CD4-positive, alpha-beta T cell (primary cell): ENCODE measurements at regions of chr12 and their contacts with region 1.

Region 1: DNA sequence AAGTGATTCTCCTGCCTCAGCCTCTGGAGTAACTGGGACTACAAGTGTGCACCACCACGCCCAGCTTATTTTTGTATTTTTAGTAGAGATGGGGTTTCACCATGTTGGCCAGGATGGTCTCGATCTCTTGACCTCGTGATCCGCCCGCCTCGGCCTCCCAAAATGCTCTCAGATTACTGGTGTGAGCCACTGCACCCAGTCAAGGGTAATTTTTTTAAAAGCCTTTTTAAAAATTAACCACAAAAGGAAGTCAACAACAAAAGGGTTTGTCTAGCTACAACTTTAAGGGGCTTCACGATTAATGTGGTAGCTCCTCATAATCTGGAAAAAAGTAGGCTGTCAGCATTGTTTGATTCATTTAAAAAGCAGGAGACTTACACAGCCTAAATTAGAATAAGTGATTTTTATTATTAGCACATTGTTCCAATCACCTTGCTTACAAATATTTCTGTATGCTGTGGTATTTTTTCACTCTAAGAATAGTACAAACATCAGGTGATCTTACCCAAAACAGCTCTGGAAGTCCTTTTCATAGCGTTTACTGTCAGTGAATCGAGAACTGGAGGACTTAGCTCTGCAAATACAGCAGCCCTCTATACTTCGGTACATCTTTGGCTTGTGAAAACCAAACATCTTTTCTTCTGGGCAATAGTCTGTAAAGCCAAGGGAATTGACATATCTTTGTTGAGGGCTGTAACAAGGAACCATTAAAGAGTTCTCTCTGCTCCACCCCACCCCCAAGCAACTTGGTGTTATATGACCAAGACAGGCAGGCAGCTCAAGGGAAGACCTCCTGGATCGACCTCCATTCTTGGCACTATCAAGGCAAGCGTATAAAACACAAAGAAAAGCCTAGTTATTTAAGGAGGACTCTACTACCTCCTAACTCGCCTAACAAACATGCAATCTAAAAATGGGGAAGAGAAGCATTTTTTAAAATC is 28.1 kb downstream of the SINHCAF start:
- DNase-seq: no peak
- ATAC-seq: no peak
- H3K4me3 ChIP-seq: no peak overlapping the region
- H3K4me3 Mint-ChIP-seq: no peak overlapping the region
- H3K27ac ChIP-seq: no peak overlapping the region
- H3K27ac Mint-ChIP-seq: peak overlapping the region; percentile 51
- H3K4me1 ChIP-seq: no peaks in the 10 kb centered on the region
- H3K4me1 Mint-ChIP-seq: peaks cover 36% of the 10 kb centered on the region
- H3K27me3 ChIP-seq: no peaks in the 10 kb centered on the region
- H3K27me3 Mint-ChIP-seq: no peaks in the 10 kb centered on the region
- CTCF ChIP-seq: no peak

Region 2: GRCh38 chr12:31325877-31326631 is 28.2 kb after region 1 on chr12 and contains the start of gene SINHCAF:
- CTCF ChIA-PET with region 1: no interaction called
- POLR2A ChIA-PET with region 1: interaction called, 3 read pairs
- intact Hi-C with region 1: loop called in 1 of 2 experiments (anchors 5 kb)
- DNase-seq: peak; percentile 96 to 100 (median 99)
- ATAC-seq: peak; percentile 52
- H3K4me3 ChIP-seq: peak within 1 kb of the TSS; percentile 99
- H3K4me3 Mint-ChIP-seq: peak within 1 kb of the TSS; percentile 92
- H3K27ac ChIP-seq: peak within 1 kb of the TSS; percentile 77 to 95
- H3K27ac Mint-ChIP-seq: peak within 1 kb of the TSS; percentile 85
- H3K4me1 ChIP-seq: peaks cover 27% of the 10 kb centered on the region
- H3K4me1 Mint-ChIP-seq: peaks cover 32% of the 10 kb centered on the region
- H3K27me3 ChIP-seq: no peaks in the 10 kb centered on the region
- H3K27me3 Mint-ChIP-seq: no peaks in the 10 kb centered on the region
- CTCF ChIP-seq: no peak
- total RNA-seq, gene SINHCAF: 103 to 119 TPM